Activated naive CD4-positive, alpha-beta T cell treated with anti-CD3 and anti-CD28 coated beads, Interleukin-2, amount 10 ng/mL, durations not matched to agents 7 days and 5 days (primary cell): ENCODE measurements at regions of chr12 and their contacts with region 1.

Region 1: GRCh38 chr12:57487597-57488401 is at the start of gene MARS1:
- DNase-seq: peak; percentile 96
- H3K4me3 Mint-ChIP-seq: peak within 1 kb of the TSS; percentile 83
- H3K27ac Mint-ChIP-seq: peak within 1 kb of the TSS; percentile 90
- H3K4me1 Mint-ChIP-seq: peaks cover 31% of the 10 kb centered on the region
- H3K27me3 Mint-ChIP-seq: no peaks in the 10 kb centered on the region

Region 2: GRCh38 chr12:57476162-57476992 is 11.4 kb before region 1 on chr12:
- CTCF ChIA-PET with region 1: interaction called, 15 read pairs
- DNase-seq: peak; percentile 89
- H3K4me3 Mint-ChIP-seq: peak overlapping the region; percentile 99
- H3K27ac Mint-ChIP-seq: peak overlapping the region; percentile 99
- H3K4me1 Mint-ChIP-seq: peaks cover 75% of the 10 kb centered on the region
- H3K27me3 Mint-ChIP-seq: no peaks in the 10 kb centered on the region